ENCODE measurements at regions of chrX and their contacts with region 1.

Region 1: GRCh38 chrX:32571579-32571978 is 639.8 kb downstream of the DMD start:
- DNase-seq: peak in 1 of 2 experiments; percentile 22
- H3K4me3 ChIP-seq: no peak overlapping the region
- H3K4me3 Mint-ChIP-seq: peak overlapping the region; percentile 2
- H3K27ac Mint-ChIP-seq: peak overlapping the region; percentile 3
- H3K4me1 ChIP-seq: peaks cover 38% of the 10 kb centered on the region
- H3K4me1 Mint-ChIP-seq: peaks cover 2% of the 10 kb centered on the region
- H3K27me3 ChIP-seq: no peaks in the 10 kb centered on the region
- H3K27me3 Mint-ChIP-seq: no peaks in the 10 kb centered on the region
- CTCF ChIP-seq: no peak

Region 2: GRCh38 chrX:32597777-32598176 is 26.2 kb after region 1 on chrX:
- CTCF ChIA-PET with region 1: no interaction called
- POLR2A ChIA-PET with region 1: no interaction called
- intact Hi-C with region 1: no loop called
- DNase-seq: no peak
- H3K4me3 ChIP-seq: no peak overlapping the region
- H3K4me3 Mint-ChIP-seq: no peak overlapping the region
- H3K27ac Mint-ChIP-seq: no peak overlapping the region
- H3K4me1 ChIP-seq: no peaks in the 10 kb centered on the region
- H3K4me1 Mint-ChIP-seq: no peaks in the 10 kb centered on the region
- H3K27me3 ChIP-seq: no peaks in the 10 kb centered on the region
- H3K27me3 Mint-ChIP-seq: no peaks in the 10 kb centered on the region
- CTCF ChIP-seq: no peak

Region 3: DNA sequence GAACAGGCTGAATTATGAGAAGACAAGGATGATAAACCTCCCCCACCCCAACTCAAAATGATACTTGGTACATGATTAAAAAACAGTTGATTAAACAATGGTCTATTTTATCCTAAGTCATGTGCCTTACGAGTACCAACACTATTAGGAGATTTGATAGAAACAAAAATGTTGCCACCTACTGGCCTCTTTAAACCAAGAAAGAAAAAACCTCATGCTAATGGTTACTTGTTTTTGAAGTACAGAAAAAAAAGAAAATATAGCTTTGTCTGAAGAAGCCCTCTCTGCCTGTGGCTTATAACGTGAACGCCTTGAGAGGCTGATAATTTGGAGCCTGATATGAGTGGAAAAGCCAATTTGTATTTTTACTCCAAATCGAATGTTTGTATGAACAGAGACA is 101.6 kb after region 1 on chrX:
- CTCF ChIA-PET with region 1: no interaction called
- POLR2A ChIA-PET with region 1: no interaction called
- intact Hi-C with region 1: loop called (anchors 1 kb)
- DNase-seq: peak in 1 of 2 experiments; percentile 13
- H3K4me3 ChIP-seq: no peak overlapping the region
- H3K4me3 Mint-ChIP-seq: no peak overlapping the region
- H3K27ac Mint-ChIP-seq: no peak overlapping the region
- H3K4me1 ChIP-seq: peaks cover 11% of the 10 kb centered on the region
- H3K4me1 Mint-ChIP-seq: peaks cover 7% of the 10 kb centered on the region
- H3K27me3 ChIP-seq: no peaks in the 10 kb centered on the region
- H3K27me3 Mint-ChIP-seq: no peaks in the 10 kb centered on the region
- CTCF ChIP-seq: no peak

Region 4: DNA sequence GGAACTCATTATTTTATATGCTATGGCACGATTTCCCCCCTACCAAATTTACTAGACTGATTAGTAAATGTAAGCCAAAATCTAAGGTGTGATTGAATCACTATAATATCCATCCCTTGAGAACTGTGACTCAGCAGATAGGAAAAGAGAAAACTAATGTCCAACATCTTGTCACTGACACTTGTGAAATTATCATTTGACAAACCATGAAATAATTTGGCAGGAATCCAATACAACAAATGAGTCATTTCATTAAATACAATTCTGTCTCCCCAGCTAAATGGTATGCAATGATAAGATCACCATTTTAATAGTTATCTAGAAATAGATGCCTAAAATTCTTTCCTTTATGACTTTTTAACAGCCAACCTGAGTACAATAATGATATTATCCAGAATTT is 177.5 kb after region 1 on chrX:
- CTCF ChIA-PET with region 1: no interaction called
- POLR2A ChIA-PET with region 1: no interaction called
- intact Hi-C with region 1: no loop called
- DNase-seq: no peak
- H3K4me3 ChIP-seq: no peak overlapping the region
- H3K4me3 Mint-ChIP-seq: no peak overlapping the region
- H3K27ac Mint-ChIP-seq: no peak overlapping the region
- H3K4me1 ChIP-seq: no peaks in the 10 kb centered on the region
- H3K4me1 Mint-ChIP-seq: no peaks in the 10 kb centered on the region
- H3K27me3 ChIP-seq: no peaks in the 10 kb centered on the region
- H3K27me3 Mint-ChIP-seq: no peaks in the 10 kb centered on the region
- CTCF ChIP-seq: no peak